Activated B cell treated with CpG ODN at 0.5 μM for 24 hours (primary cell): ENCODE measurements at regions of chr5 and their contacts with region 1.

Region 1: GRCh38 chr5:61658592-61659008 is 326.5 kb downstream of the ZSWIM6 start:
- DNase-seq: peak; percentile 70
- ATAC-seq: peak; percentile 64
- H3K4me3 Mint-ChIP-seq: no peak overlapping the region
- H3K27ac Mint-ChIP-seq: no peak overlapping the region
- H3K4me1 Mint-ChIP-seq: no peaks in the 10 kb centered on the region
- H3K27me3 Mint-ChIP-seq: peaks cover 8% of the 10 kb centered on the region
- CTCF ChIP-seq: peak; percentile 88

Region 2: GRCh38 chr5:60960591-60960990 is 698.0 kb before region 1 on chr5:
- CTCF ChIA-PET with region 1: interaction called, 38 read pairs
- POLR2A ChIA-PET with region 1: no interaction called
- intact Hi-C with region 1: loop called (anchors 1 kb)
- DNase-seq: no peak
- ATAC-seq: no peak
- H3K4me3 Mint-ChIP-seq: no peak overlapping the region
- H3K27ac Mint-ChIP-seq: no peak overlapping the region
- H3K4me1 Mint-ChIP-seq: peaks cover 2% of the 10 kb centered on the region
- H3K27me3 Mint-ChIP-seq: no peaks in the 10 kb centered on the region
- CTCF ChIP-seq: no peak

Region 3: DNA sequence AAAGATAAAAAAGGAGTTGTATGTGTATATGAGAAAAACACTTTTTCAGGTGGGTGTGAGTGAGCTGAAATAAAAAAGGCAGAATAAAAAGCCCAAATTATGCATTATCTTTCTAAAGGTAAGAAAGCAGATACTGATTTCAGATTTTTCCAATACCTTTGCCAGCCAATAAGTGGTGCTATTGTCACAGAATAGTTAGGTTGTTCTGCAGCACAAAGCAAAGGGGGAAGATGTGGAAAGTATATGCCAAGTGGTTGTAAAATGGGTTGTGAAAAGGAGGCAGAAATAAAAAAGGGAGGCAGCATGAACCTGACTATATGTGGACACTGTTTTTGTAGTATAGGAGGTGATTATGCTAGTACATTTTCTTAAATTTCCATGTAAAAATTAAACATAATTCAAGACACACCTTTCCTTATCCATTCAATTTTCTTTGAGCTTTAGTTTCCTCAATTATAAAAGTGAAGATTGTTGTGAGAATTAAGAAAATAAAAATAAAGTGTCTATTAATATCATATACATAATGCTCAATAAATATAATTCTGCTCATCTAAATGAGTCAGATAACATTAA is 603.1 kb before region 1 on chr5:
- CTCF ChIA-PET with region 1: interaction called, 112 read pairs
- POLR2A ChIA-PET with region 1: no interaction called
- intact Hi-C with region 1: loop called (anchors 1 kb)
- DNase-seq: no peak
- ATAC-seq: peak; percentile 45
- H3K4me3 Mint-ChIP-seq: no peak overlapping the region
- H3K27ac Mint-ChIP-seq: no peak overlapping the region
- H3K4me1 Mint-ChIP-seq: no peaks in the 10 kb centered on the region
- H3K27me3 Mint-ChIP-seq: no peaks in the 10 kb centered on the region
- CTCF ChIP-seq: no peak

Region 4: GRCh38 chr5:61167382-61167781 is 491.2 kb before region 1 on chr5:
- CTCF ChIA-PET with region 1: interaction called, 3 read pairs
- POLR2A ChIA-PET with region 1: no interaction called
- intact Hi-C with region 1: loop called (anchors 1 kb)
- DNase-seq: no peak
- ATAC-seq: no peak
- H3K4me3 Mint-ChIP-seq: no peak overlapping the region
- H3K27ac Mint-ChIP-seq: no peak overlapping the region
- H3K4me1 Mint-ChIP-seq: peaks cover 10% of the 10 kb centered on the region
- H3K27me3 Mint-ChIP-seq: no peaks in the 10 kb centered on the region
- CTCF ChIP-seq: no peak

Region 5: DNA sequence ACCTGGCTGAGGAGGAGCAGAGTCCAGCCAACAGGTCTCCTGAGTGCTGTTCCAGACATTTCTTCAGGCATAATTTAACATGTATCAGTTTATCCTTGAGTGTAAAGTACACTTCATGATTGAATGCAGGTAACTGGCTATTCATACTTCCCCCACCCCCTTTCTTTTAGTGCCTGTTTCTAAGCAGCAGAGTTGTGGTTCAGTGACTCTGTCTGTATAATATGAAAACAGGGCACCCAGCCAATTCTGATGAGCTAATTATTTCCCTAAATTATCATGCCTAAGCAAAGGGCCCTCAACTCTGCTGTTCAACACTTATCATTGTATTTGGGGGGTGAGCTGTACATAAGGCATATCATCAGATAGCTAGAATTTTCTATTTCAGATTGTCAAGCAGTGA is 378.4 kb before region 1 on chr5:
- CTCF ChIA-PET with region 1: no interaction called
- POLR2A ChIA-PET with region 1: no interaction called
- intact Hi-C with region 1: loop called (anchors 2 kb)
- DNase-seq: no peak
- ATAC-seq: peak; percentile 77
- H3K4me3 Mint-ChIP-seq: no peak overlapping the region
- H3K27ac Mint-ChIP-seq: no peak overlapping the region
- H3K4me1 Mint-ChIP-seq: peaks cover 37% of the 10 kb centered on the region
- H3K27me3 Mint-ChIP-seq: no peaks in the 10 kb centered on the region
- CTCF ChIP-seq: no peak

Region 6: GRCh38 chr5:62190173-62190572 is 531.6 kb after region 1 on chr5:
- CTCF ChIA-PET with region 1: no interaction called
- POLR2A ChIA-PET with region 1: no interaction called
- intact Hi-C with region 1: no loop called
- DNase-seq: no peak
- ATAC-seq: no peak
- H3K4me3 Mint-ChIP-seq: no peak overlapping the region
- H3K27ac Mint-ChIP-seq: no peak overlapping the region
- H3K4me1 Mint-ChIP-seq: no peaks in the 10 kb centered on the region
- H3K27me3 Mint-ChIP-seq: peaks cover 3% of the 10 kb centered on the region
- CTCF ChIP-seq: no peak